ENCODE measurements at regions of chrX and their contacts with region 1.

Region 1: DNA sequence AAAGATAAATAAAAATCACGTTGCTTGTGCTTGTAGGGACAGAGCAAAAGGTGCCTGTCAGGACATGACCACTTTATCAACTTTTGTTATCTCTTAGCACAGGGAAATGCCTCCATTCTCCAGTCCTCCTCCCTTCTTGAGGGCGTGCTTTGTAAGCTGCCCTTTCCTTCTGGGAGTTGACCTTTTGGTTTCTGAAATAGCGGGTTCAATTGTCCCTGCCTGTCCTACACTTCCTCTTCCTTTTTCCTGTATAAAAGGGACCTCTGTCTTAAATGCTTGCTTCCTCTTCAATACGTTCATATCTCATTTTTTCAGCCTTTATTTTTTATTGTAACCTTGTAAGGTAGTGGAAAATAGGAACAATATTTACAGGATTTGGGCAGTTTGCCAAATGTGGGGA is 153.5 kb downstream of the SH3BGRL start:
- DNase-seq: peak; percentile 54

Region 2: DNA sequence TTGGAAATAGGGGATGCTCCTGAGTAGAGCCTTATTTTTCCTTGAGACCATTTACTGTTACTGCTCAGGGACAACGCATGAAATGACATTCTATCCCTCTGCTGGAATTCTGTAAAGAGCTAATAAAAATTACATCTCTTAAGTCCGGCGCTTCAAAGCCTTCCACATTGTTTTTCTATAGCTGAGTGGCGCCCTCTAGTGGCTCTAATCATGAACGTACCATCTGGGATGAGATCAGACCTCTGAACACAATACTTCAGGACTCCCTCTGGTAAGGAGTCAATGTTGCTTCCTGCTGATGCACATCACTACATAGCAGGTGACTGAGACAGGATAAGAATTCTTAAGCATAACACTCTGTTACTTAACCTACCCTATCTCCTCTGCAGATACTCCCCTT is 159.7 kb before region 1 on chrX:
- in situ Hi-C with region 1: loop called (anchors 25 kb)
- DNase-seq: peak; percentile 83

Region 3: DNA sequence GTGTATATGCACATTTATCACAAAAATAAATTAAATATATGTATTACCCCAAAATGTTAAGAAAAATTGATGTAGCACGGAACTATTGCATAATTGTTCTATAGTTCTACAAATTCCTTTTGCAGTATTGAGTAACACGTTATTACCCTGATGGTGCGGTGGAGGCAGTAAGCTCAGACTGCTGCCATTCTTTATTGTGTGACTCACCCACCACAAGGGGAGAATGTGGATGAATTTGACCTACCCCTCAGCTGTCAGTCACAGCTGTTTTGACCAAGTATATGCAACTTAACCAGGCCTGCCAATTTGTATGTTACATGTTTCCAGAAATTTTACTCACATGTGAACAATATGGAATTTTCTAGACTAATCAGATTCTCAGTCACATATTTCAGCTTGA is 353.1 kb after region 1 on chrX:
- in situ Hi-C with region 1: no loop called
- DNase-seq: no peak

Measured in KBM-7 (cell line).